Spleen (tissue), 13 donors: ENCODE measurements at regions of chr11 and their contacts with region 1.

Region 1: GRCh38 chr11:47938791-47939560 is 41.4 kb upstream of the PTPRJ start:
- DNase-seq: no peak
- H3K4me3 ChIP-seq: no peak overlapping the region
- H3K27ac ChIP-seq: peak overlapping the region in 4 of 8 donors; percentile 64 to 79 (median 66)
- H3K4me1 ChIP-seq: peaks cover 12 to 80% (median 48%) of the 10 kb centered on the region in 6 donors
- H3K27me3 ChIP-seq: no peaks in the 10 kb centered on the region
- CTCF ChIP-seq: no peak
- POLR2A ChIP-seq: no peak

Region 2: GRCh38 chr11:47758076-47758475 is 180.9 kb before region 1 on chr11:
- intact Hi-C with region 1: no loop called
- DNase-seq: no peak
- H3K4me3 ChIP-seq: no peak overlapping the region
- H3K27ac ChIP-seq: no peak overlapping the region
- H3K4me1 ChIP-seq: peaks cover 0 to 11% (median 0%) of the 10 kb centered on the region in 6 donors
- H3K27me3 ChIP-seq: no peaks in the 10 kb centered on the region
- CTCF ChIP-seq: no peak
- POLR2A ChIP-seq: no peak

Region 3: DNA sequence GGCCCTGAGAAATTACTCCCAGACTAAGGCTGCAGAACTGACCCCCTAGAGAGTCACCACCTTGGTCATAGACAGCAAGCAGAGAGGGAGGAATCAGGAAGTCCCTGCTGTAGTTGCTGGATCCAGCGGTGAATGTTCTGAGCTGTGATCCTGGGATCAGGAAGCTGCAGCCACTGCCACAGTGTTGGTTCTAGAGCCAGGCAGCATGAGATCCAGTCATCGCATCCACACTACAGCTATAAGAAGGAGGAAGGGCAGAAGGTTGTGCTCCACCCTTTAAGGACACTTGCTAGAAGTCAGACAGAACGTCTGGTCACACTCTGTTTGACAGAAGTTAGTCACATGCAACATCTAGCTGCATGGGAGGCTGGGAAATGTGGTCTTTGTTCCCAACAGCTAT is 172.9 kb after region 1 on chr11:
- intact Hi-C with region 1: loop called (anchors 5 kb)
- DNase-seq: no peak
- H3K4me3 ChIP-seq: no peak overlapping the region
- H3K27ac ChIP-seq: peak overlapping the region in 1 of 8 donors; percentile 44
- H3K4me1 ChIP-seq: peaks cover 30 to 56% (median 48%) of the 10 kb centered on the region in 6 donors
- H3K27me3 ChIP-seq: no peaks in the 10 kb centered on the region
- CTCF ChIP-seq: no peak
- POLR2A ChIP-seq: no peak